ENCODE measurements at regions of chr11 and their contacts with region 1.

Region 1: DNA sequence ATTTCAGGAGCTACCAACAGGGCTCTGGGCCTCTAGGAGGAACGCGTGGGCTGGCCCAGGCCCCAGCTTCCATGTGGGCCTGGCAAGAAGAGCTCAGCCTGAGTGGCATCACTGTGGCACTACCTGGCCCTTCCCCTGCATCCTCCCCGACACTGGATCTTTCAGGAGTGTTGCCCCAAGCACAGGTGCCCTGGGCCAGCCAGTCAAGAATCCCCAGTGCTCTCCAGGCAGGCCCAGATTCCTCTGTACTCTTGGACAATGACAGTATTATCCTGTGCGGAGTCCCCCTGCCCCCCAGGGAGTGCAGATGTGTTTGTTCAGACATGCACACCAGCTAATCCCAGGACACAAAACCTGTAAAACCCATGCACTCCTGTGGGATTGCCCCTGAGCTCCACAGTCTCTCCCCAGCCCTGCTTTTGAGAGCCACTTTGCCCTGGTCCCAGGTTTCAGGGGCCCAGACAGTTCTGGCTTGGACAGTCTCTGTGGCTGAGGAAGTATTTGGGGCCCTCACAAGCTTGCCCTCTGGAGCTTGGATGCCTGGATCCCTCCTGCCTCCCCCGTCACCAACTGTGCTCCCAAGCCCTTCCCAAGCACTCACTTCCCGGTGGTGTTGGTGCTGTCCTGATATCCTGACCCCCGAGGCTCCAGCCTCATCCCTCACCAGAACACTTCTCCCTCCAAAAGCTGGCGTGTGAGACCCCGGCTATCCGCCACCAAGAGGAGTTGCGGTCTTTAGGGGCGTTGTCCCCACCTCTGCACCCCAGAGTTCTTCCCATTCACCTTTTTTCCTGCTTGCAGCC is 39.9 kb downstream of the KCNC1 start:
- DNase-seq: peak in 1 of 5 donors; percentile 21
- H3K4me3 ChIP-seq: no peak overlapping the region
- H3K27ac ChIP-seq: no peak overlapping the region
- H3K4me1 ChIP-seq: no peaks in the 10 kb centered on the region
- H3K27me3 ChIP-seq: no peaks in the 10 kb centered on the region
- CTCF ChIP-seq: no peak
- EP300 ChIP-seq: no peak
- POLR2A ChIP-seq: no peak

Region 2: GRCh38 chr11:18420067-18420466 is 645.6 kb after region 1 on chr11:
- intact Hi-C with region 1: loop called in 1 of 4 experiments (anchors 5 kb)
- DNase-seq: no peak
- H3K4me3 ChIP-seq: no peak overlapping the region
- H3K27ac ChIP-seq: no peak overlapping the region
- H3K4me1 ChIP-seq: no peaks in the 10 kb centered on the region
- H3K27me3 ChIP-seq: no peaks in the 10 kb centered on the region
- CTCF ChIP-seq: no peak
- EP300 ChIP-seq: no peak
- POLR2A ChIP-seq: no peak

Measured in ovary (tissue), 10 donors.